IMR-90 (cell line): ENCODE measurements at regions of chr6 and their contacts with region 1.

Region 1: GRCh38 chr6:99119109-99120031 is 171.6 kb upstream of the FBXL4 start:
- DNase-seq: peak; percentile 39
- ATAC-seq: peak; percentile 76
- H3K4me3 ChIP-seq: no peak overlapping the region
- H3K27ac ChIP-seq: no peak overlapping the region
- H3K4me1 ChIP-seq: no peaks in the 10 kb centered on the region
- H3K27me3 ChIP-seq: no peaks in the 10 kb centered on the region
- CTCF ChIP-seq: peak; percentile 77
- POLR2A ChIP-seq: no peak
- RAD21 ChIP-seq: peak; percentile 88

Region 2: DNA sequence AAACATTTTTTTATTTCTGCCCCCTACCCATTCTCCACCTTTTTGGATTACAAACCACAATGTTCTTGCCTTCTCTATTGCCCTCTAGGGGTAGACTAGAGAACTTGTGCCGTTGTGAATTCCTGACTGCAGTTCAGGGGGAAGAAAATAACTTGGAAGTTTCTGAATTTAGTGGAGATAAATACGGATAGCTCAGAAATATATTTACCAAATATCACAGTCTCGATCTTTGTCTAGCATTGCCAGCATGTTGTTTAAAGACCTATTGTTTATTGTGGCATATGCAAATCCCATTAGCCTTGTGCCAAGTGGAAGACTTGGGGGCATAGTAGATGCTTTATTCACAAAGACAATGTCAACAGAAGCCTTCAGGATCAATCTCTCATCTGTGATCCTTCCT is 1682.3 kb before region 1 on chr6:
- CTCF ChIA-PET with region 1: interaction called, 7 read pairs
- POLR2A ChIA-PET with region 1: no interaction called
- dilution Hi-C with region 1: no loop called
- in situ Hi-C with region 1: no loop called
- intact Hi-C with region 1: loop called (anchors 1 kb)
- DNase-seq: peak; percentile 18
- ATAC-seq: peak; percentile 62; the same call in 1 of the 2 replicates
- H3K4me3 ChIP-seq: no peak overlapping the region
- H3K27ac ChIP-seq: no peak overlapping the region
- H3K4me1 ChIP-seq: no peaks in the 10 kb centered on the region
- H3K27me3 ChIP-seq: no peaks in the 10 kb centered on the region
- CTCF ChIP-seq: peak; percentile 64
- POLR2A ChIP-seq: no peak
- RAD21 ChIP-seq: peak; percentile 42

Region 3: DNA sequence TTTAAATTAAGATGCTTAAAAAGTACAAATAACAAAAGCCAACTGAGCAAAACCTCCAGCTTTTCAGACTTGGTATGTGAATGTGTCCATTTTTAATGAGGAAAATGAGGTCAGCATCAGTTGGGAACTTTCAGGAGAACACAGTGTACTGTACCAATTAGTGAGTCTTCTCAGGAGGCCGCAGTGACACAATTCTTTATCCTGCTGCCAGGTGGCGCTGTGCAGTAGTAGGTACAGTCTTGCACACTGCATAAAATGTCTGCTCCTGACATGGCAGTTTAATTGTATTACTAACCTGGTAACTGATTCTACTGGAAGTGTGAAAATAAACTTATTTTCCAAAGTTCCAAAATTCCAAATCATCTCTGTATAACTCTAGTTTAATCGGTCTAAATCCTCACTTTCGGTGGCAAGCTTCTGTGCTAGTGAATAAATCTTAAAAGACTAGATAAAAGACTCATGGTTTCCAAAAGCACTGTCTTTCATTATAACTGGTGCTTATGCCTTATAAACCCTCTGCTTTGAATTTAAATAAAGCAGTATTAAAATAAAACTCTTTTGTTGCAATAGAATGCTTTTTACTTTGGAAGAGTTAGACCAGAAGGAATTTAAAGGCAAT is 1621.5 kb before region 1 on chr6:
- CTCF ChIA-PET with region 1: interaction called, 3 read pairs
- POLR2A ChIA-PET with region 1: no interaction called
- dilution Hi-C with region 1: no loop called
- in situ Hi-C with region 1: loop called (anchors 25 kb)
- intact Hi-C with region 1: loop called (anchors 1 kb)
- DNase-seq: peak; percentile 65
- ATAC-seq: peak; percentile 98
- H3K4me3 ChIP-seq: no peak overlapping the region
- H3K27ac ChIP-seq: no peak overlapping the region
- H3K4me1 ChIP-seq: no peaks in the 10 kb centered on the region
- H3K27me3 ChIP-seq: 0 out of 2 replicates have a peak, but pooled peaks cover 2% of the 10 kb centered on the region
- CTCF ChIP-seq: peak; percentile 83
- POLR2A ChIP-seq: no peak
- RAD21 ChIP-seq: peak; percentile 71

Region 4: GRCh38 chr6:97705568-97705967 is 1413.8 kb before region 1 on chr6:
- CTCF ChIA-PET with region 1: no interaction called
- POLR2A ChIA-PET with region 1: no interaction called
- dilution Hi-C with region 1: no loop called
- in situ Hi-C with region 1: no loop called
- intact Hi-C with region 1: loop called (anchors 1 kb)
- DNase-seq: peak; percentile 2
- ATAC-seq: no peak
- H3K4me3 ChIP-seq: no peak overlapping the region
- H3K27ac ChIP-seq: no peak overlapping the region
- H3K4me1 ChIP-seq: no peaks in the 10 kb centered on the region
- H3K27me3 ChIP-seq: no peaks in the 10 kb centered on the region
- CTCF ChIP-seq: peak; percentile 31; the same call in 1 of the 2 replicates
- POLR2A ChIP-seq: no peak
- RAD21 ChIP-seq: peak; percentile 37; the same call in 1 of the 2 replicates

Region 5: GRCh38 chr6:98054453-98054852 is 1064.9 kb before region 1 on chr6:
- CTCF ChIA-PET with region 1: no interaction called
- POLR2A ChIA-PET with region 1: no interaction called
- dilution Hi-C with region 1: no loop called
- in situ Hi-C with region 1: no loop called
- intact Hi-C with region 1: loop called (anchors 10 kb)
- DNase-seq: peak; percentile 1
- ATAC-seq: no peak
- H3K4me3 ChIP-seq: no peak overlapping the region
- H3K27ac ChIP-seq: no peak overlapping the region
- H3K4me1 ChIP-seq: no peaks in the 10 kb centered on the region
- H3K27me3 ChIP-seq: no peaks in the 10 kb centered on the region
- CTCF ChIP-seq: peak; percentile 18; the same call in 1 of the 2 replicates
- POLR2A ChIP-seq: no peak
- RAD21 ChIP-seq: no peak

Region 6: GRCh38 chr6:99416892-99417767 is 297.8 kb after region 1 on chr6:
- CTCF ChIA-PET with region 1: no interaction called
- POLR2A ChIA-PET with region 1: no interaction called
- dilution Hi-C with region 1: no loop called
- in situ Hi-C with region 1: no loop called
- intact Hi-C with region 1: no loop called
- DNase-seq: no peak
- ATAC-seq: no peak
- H3K4me3 ChIP-seq: no peak overlapping the region
- H3K27ac ChIP-seq: no peak overlapping the region
- H3K4me1 ChIP-seq: no peaks in the 10 kb centered on the region
- H3K27me3 ChIP-seq: no peaks in the 10 kb centered on the region
- CTCF ChIP-seq: no peak
- POLR2A ChIP-seq: no peak
- RAD21 ChIP-seq: no peak